K562 (cell line): ENCODE measurements at regions of chr11 and their contacts with region 1.

Region 1: GRCh38 chr11:44248109-44248508 is 61.8 kb downstream of the ALX4 start:
- DNase-seq: no peak
- ATAC-seq: no peak
- H3K4me3 ChIP-seq: no peak overlapping the region
- H3K27ac ChIP-seq: no peak overlapping the region
- H3K4me1 ChIP-seq: peaks cover 5 to 9% of the 10 kb centered on the region in 2 experiments; a peak in 4 of 5 replicates
- H3K27me3 ChIP-seq: no peaks in the 10 kb centered on the region
- CTCF ChIP-seq: no peak
- EP300 ChIP-seq: no peak
- POLR2A ChIP-seq: no peak
- RAD21 ChIP-seq: no peak

Region 2: GRCh38 chr11:44235765-44236201 is 12.3 kb before region 1 on chr11:
- CTCF ChIA-PET with region 1: no interaction called
- POLR2A ChIA-PET with region 1: interaction called, 12 read pairs
- in situ Hi-C with region 1: no loop called
- intact Hi-C with region 1: no loop called
- DNase-seq: no peak
- ATAC-seq: no peak
- H3K4me3 ChIP-seq: no peak overlapping the region
- H3K27ac ChIP-seq: no peak overlapping the region
- H3K4me1 ChIP-seq: no peaks in the 10 kb centered on the region
- H3K27me3 ChIP-seq: no peaks in the 10 kb centered on the region
- CTCF ChIP-seq: no peak
- EP300 ChIP-seq: no peak
- POLR2A ChIP-seq: no peak
- RAD21 ChIP-seq: no peak